Heart left ventricle (tissue), 16 donors: ENCODE measurements at regions of chr16 and their contacts with region 1.

Region 1: GRCh38 chr16:49855280-49855821 is 561 bp downstream of the ZNF423 start:
- DNase-seq: peak; percentile 91 to 93 (median 91)
- ATAC-seq: peak; percentile 65 to 83 (median 72)
- H3K4me3 ChIP-seq: peak overlapping the region; percentile 36 to 94 (median 76)
- H3K27ac ChIP-seq: peak overlapping the region; percentile 84 to 99 (median 94)
- H3K4me1 ChIP-seq: peaks cover 0 to 64% (median 36%) of the 10 kb centered on the region in 12 donors
- H3K27me3 ChIP-seq: peaks cover 0 to 41% (median 0%) of the 10 kb centered on the region in 9 donors
- CTCF ChIP-seq: no peak
- POLR2A ChIP-seq: peak in 1 of 2 donors; percentile 72

Region 2: GRCh38 chr16:49407873-49408550 is 447.3 kb before region 1 on chr16:
- intact Hi-C with region 1: loop called in 1 of 10 experiments (anchors 5 kb)
- DNase-seq: peak; percentile 81 to 90 (median 87)
- ATAC-seq: peak; percentile 95 to 99 (median 98)
- H3K4me3 ChIP-seq: no peak overlapping the region
- H3K27ac ChIP-seq: no peak overlapping the region
- H3K4me1 ChIP-seq: peaks cover 0 to 7% (median 0%) of the 10 kb centered on the region in 12 donors
- H3K27me3 ChIP-seq: no peaks in the 10 kb centered on the region
- CTCF ChIP-seq: peak; percentile 85 to 94 (median 91)
- POLR2A ChIP-seq: no peak

Region 3: GRCh38 chr16:49491771-49492761 is 363.3 kb before region 1 on chr16:
- intact Hi-C with region 1: loop called in 6 of 10 experiments (anchors 2 to 10 kb)
- DNase-seq: peak; percentile 44 to 80 (median 53)
- ATAC-seq: peak; percentile 55 to 88 (median 73)
- H3K4me3 ChIP-seq: peak overlapping the region in 11 of 12 donors; percentile 0 to 56 (median 46)
- H3K27ac ChIP-seq: peak overlapping the region in 6 of 12 donors; percentile 2 to 67 (median 42)
- H3K4me1 ChIP-seq: peaks cover 0 to 17% (median 7%) of the 10 kb centered on the region in 12 donors
- H3K27me3 ChIP-seq: no peaks in the 10 kb centered on the region
- CTCF ChIP-seq: peak in 11 of 12 donors; percentile 92 to 98 (median 96)
- POLR2A ChIP-seq: peak in 1 of 2 donors; percentile 12

Region 4: DNA sequence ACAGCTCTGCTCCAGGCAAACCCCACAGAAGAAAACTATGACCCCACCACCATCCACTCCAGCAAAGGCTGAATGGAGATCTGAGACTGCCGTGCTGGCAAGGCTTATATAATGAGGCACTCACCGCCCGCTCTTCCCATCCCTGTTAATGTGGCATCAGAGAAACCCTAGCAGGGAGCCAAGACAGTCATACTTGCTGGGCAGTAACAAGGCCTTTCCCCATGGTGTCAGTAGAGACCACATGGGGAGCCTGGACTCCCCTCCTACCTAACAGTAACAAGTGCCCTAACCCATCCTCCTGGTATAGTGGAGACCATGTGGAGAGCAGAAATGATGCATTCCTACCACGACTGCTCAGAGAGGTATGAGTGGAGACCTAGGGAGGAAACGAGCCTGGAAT is 246.6 kb before region 1 on chr16:
- intact Hi-C with region 1: loop called in 5 of 10 experiments (anchors 5 to 10 kb)
- DNase-seq: no peak
- ATAC-seq: peak; percentile 58 to 90 (median 88)
- H3K4me3 ChIP-seq: no peak overlapping the region
- H3K27ac ChIP-seq: no peak overlapping the region
- H3K4me1 ChIP-seq: peaks cover 0 to 2% (median 0%) of the 10 kb centered on the region in 12 donors
- H3K27me3 ChIP-seq: no peaks in the 10 kb centered on the region
- CTCF ChIP-seq: peak; percentile 31 to 68 (median 56)
- POLR2A ChIP-seq: no peak

Region 5: GRCh38 chr16:49701789-49702494 is 153.4 kb before region 1 on chr16:
- intact Hi-C with region 1: loop called in 3 of 10 experiments (anchors 5 kb)
- DNase-seq: peak; percentile 39 to 87 (median 79)
- ATAC-seq: peak; percentile 50 to 79 (median 68)
- H3K4me3 ChIP-seq: peak overlapping the region in 1 of 12 donors; percentile 22
- H3K27ac ChIP-seq: peak overlapping the region in 6 of 12 donors; percentile 3 to 57 (median 18)
- H3K4me1 ChIP-seq: peaks cover 0 to 55% (median 33%) of the 10 kb centered on the region in 12 donors
- H3K27me3 ChIP-seq: peaks cover 0 to 3% (median 0%) of the 10 kb centered on the region in 9 donors
- CTCF ChIP-seq: no peak
- POLR2A ChIP-seq: no peak

Region 6: GRCh38 chr16:49776085-49776595 is 79.2 kb before region 1 on chr16:
- intact Hi-C with region 1: loop called in 3 of 10 experiments (anchors 2 to 5 kb)
- DNase-seq: peak; percentile 59 to 82 (median 65)
- ATAC-seq: peak; percentile 64 to 84 (median 70)
- H3K4me3 ChIP-seq: peak overlapping the region in 4 of 12 donors; percentile 3 to 28 (median 12)
- H3K27ac ChIP-seq: peak overlapping the region; percentile 28 to 73 (median 63)
- H3K4me1 ChIP-seq: peaks cover 3 to 63% (median 32%) of the 10 kb centered on the region in 12 donors
- H3K27me3 ChIP-seq: no peaks in the 10 kb centered on the region
- CTCF ChIP-seq: no peak
- POLR2A ChIP-seq: no peak

Region 7: DNA sequence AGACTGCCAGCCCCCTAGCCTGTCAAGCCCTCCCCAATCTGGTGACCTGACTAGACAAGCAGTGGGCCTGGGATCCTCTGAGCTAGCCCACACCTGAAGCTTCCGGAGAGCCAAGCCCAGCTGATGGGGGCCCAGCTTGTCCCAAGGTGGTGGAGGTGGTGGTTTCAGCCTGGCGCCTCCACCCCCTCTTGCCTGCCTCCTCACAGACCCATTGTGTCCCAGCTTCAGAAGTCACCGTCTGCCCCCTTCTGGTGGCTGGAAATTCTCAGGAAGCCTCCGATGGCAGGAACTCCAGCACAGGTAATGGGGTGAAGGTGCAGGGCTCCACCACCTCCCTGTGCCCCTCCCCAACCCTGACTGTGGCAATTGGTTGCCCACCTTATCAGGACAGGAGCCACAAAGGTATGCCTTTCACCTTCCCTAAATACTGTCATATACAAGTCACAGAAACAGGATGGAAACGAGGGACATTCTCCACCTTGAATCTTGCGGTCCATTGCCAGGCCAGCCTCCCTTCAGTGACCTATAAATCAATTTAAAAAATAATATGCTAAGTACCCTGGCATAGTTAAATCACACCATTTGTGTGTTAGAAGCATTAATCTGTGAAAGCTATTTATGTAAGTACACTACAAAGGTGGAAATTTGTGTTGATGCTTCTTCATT is 66.6 kb after region 1 on chr16:
- intact Hi-C with region 1: loop called in 1 of 10 experiments (anchors 2 kb)
- DNase-seq: peak in 4 of 5 donors; percentile 36 to 62 (median 58)
- ATAC-seq: peak; percentile 60 to 85 (median 70)
- H3K4me3 ChIP-seq: no peak overlapping the region
- H3K27ac ChIP-seq: no peak overlapping the region
- H3K4me1 ChIP-seq: no peaks in the 10 kb centered on the region
- H3K27me3 ChIP-seq: peaks cover 0 to 5% (median 0%) of the 10 kb centered on the region in 9 donors
- CTCF ChIP-seq: peak; percentile 33 to 78 (median 64)
- POLR2A ChIP-seq: no peak

Region 8: DNA sequence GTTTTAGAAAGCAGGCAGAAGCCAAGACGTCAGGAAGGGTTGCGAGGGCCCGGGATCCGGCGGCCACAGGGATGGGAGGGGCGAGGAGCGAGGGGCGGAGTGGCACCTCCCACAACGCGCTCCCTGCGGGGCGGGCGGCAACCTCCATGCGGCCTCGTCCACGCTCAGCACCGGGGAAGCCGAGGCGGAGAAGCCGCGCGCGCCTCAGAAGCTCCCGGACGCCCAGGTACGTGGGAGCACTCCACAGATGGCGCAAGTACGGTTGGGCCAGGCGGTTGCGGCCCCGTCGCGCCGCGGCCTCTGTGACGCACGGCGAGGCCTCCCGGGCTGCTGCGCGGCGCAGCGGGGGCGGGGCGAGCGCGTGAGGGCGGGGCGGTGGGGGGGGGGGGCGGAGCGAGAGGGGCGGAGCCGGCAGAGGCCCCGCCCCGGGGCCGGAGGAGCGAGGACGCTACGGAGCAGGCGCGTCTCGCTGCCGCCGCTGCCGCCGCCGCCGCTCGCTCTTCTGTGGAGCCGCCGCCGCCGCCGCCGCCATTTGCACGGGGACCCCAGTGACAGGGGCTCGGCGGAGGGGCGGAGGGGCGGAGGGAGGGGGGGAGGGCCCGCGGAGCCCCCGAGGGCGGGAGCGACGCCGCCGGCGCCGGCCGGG is 297.6 kb after region 1 on chr16 and contains the start of gene TENT4B:
- intact Hi-C with region 1: no loop called
- DNase-seq: peak; percentile 90 to 94 (median 91)
- ATAC-seq: peak; percentile 80 to 95 (median 94)
- H3K4me3 ChIP-seq: peak within 1 kb of the TSS; percentile 67 to 98 (median 86)
- H3K27ac ChIP-seq: peak within 1 kb of the TSS; percentile 89 to 99 (median 96)
- H3K4me1 ChIP-seq: peaks cover 0 to 39% (median 20%) of the 10 kb centered on the region in 12 donors
- H3K27me3 ChIP-seq: no peaks in the 10 kb centered on the region
- CTCF ChIP-seq: no peak
- POLR2A ChIP-seq: peak in 1 of 2 donors; percentile 74
- total RNA-seq, gene TENT4B: 4.8 to 8.8 (median 7.0) TPM